HEK293 (cell line): ENCODE measurements at regions of chr12 and their contacts with region 1.

Region 1: DNA sequence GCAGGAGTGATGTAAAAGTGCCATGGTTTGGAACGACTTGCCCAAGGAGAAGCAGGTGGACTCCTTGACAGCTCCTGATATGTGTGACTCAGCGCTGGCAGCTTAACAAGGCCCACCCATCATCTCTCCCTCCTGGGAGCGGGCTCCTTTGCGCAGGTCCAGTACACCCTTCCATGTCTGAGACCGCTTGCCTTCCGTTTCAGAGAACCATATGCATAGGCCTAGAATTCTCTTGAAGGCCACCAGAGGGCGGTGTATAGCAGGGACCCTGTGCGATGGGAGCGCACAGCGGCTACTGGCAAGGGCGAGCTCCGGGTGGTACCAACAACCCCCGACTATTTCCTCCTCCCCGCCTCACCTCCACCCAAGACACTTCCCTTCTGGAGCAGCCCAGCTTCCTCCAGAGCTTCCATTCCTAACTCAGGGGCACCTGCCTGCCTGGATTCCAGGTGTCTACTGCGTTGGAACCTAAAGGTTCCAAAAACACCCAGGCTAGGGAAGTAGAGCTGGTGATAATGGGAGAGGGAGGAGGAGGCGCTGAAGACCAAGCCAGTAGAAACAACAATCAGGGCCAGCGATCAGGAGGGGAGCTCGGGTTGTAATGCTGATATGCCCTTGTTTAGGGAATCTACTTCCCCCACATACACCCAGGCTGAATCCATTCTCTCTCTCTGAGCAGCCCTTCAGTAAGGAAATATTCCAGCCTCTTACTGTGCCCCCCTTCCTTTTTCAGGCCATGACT is 6.2 kb downstream of the DHH start:
- H3K4me3 ChIP-seq: peak overlapping the region; percentile 25
- H3K27ac ChIP-seq: no peak overlapping the region
- H3K4me1 ChIP-seq: no peaks in the 10 kb centered on the region
- CTCF ChIP-seq: peak; percentile 97

Region 2: GRCh38 chr12:49043856-49044258 is 44.5 kb before region 1 on chr12:
- CTCF ChIA-PET with region 1: interaction called, 12 read pairs
- POLR2A ChIA-PET with region 1: no interaction called
- H3K4me3 ChIP-seq: no peak overlapping the region
- H3K27ac ChIP-seq: no peak overlapping the region
- H3K4me1 ChIP-seq: no peaks in the 10 kb centered on the region
- CTCF ChIP-seq: peak; percentile 95

Region 3: DNA sequence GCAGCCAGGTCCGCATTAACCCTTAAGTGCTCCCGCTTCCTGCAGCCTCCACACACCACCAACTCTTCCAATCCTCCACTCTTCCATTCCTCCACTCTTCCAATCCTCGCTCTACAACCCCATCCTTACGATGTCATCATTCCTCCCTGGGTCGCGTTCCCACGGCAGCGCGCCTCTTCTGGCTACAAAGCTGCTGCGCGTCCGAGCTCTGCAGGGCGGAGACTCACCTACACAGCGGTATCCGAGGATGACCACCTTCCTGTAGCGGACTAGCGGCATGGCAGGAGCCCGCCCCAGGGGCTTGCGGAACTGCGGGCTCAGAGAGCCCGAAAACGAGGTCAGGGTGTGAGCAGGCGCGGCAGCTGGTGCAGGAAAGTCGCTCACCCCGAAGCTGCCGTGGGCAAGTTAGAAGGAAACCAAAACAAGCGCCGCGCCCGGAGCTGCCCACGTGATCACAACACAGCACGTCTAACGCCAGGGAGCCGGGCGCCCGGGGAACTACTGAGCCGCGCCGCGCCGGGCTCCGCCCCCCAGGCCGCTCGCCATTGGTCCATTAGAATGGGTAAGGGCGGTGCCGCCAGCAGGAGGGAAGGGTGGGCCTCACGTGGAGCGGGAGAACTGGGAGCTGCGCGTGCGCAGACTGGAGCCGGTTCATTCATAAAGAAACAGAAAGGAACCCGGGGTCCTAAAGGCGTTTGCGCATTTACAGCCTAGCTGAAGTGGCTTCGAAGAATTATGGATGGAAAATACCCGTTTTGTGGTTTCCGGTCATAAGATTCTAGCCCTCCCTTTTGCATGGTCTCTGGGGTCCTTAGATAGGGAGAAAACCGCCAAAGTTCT is 18.6 kb before region 1 on chr12 and contains the start of gene RHEBL1:
- CTCF ChIA-PET with region 1: interaction called, 131 read pairs
- POLR2A ChIA-PET with region 1: interaction called, 15 read pairs
- H3K4me3 ChIP-seq: peak within 1 kb of the TSS; percentile 74
- H3K27ac ChIP-seq: peak within 1 kb of the TSS; percentile 34; the same call in 1 of the 2 replicates
- H3K4me1 ChIP-seq: peaks cover 4% of the 10 kb centered on the region
- CTCF ChIP-seq: peak; percentile 93

Region 4: DNA sequence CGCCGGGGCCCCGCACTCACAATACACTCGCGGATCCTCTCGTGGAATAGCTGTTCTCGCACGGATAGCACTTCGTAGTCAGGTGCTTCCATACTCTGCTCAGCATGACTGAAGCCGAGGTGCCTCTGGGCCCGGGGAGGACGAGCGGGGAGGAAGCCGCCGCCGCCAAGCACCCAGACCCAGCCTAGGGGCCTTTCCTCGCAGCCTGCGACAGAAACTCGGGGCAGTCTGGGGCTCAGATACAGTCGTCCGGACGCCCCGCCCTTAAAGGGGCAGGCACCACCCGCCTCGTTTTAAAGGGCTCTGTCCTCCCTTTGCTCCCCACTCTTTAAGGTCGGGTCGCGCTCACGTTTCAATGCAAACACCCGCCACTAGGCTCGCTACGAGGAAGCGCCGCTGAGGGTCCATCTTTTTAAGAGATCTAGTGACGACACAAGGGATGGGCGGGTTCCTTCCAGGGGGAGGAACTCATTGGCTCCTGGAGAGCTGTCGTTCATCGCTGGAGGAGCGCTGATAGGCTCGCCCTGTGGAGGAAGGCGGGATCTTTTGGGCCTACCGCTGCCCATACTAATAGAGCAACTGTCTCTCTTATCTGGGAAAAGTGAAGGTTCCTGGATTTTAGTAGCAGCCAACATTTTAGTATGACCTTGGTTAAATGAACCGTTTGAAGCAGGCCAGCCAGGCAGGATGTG is 22.2 kb after region 1 on chr12 and contains the start of gene LMBR1L:
- CTCF ChIA-PET with region 1: interaction called, 53 read pairs
- POLR2A ChIA-PET with region 1: interaction called, 16 read pairs
- H3K4me3 ChIP-seq: peak within 1 kb of the TSS; percentile 98
- H3K27ac ChIP-seq: peak within 1 kb of the TSS; percentile 84
- H3K4me1 ChIP-seq: peaks cover 10% of the 10 kb centered on the region
- CTCF ChIP-seq: peak; percentile 65; the same call in 1 of the 2 replicates

Region 5: GRCh38 chr12:49244176-49244575 is 155.8 kb after region 1 on chr12:
- CTCF ChIA-PET with region 1: interaction called, 14 read pairs
- POLR2A ChIA-PET with region 1: no interaction called
- H3K4me3 ChIP-seq: no peak overlapping the region
- H3K27ac ChIP-seq: no peak overlapping the region
- H3K4me1 ChIP-seq: no peaks in the 10 kb centered on the region
- CTCF ChIP-seq: no peak